ENCODE measurements at regions of chr16 and their contacts with region 1.

Region 1: DNA sequence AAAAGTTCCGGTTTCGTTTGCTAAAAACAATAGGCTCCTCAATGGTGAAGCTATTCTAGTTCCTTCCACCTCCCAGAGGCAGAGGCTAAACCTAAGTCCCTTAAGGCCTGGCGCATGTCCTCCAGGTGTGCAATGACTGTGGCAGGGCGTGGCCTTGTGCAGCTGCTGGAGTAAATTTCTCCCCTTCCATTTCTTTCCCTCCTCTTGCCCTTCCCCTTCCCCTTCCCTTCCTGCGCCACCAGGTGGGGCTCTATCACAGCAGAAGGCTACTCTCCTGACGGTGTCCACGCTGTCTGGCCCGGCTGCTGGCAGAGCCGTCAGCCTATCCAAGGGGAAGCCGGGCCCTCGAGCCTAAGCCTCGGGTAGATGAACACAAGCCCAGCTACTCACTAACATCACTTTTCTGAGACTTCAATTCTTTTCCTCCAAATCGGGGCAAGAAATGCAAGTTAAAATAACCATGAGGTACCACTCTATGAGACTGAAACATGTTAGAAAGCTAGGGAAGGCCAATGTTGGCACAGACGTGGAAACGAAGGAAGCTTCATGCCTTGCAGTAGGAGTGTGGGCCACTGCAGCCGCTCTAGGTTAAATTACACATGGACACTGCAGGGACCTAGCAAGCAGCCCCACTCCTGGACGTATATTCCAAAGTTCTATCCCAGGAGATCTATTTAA is 34.4 kb downstream of the C16orf78 start:
- DNase-seq: peak; percentile 87 to 91 (median 88)
- ATAC-seq: peak; percentile 98
- H3K4me3 ChIP-seq: no peak overlapping the region
- H3K27ac ChIP-seq: no peak overlapping the region
- H3K4me1 ChIP-seq: peaks cover 7% of the 10 kb centered on the region
- H3K27me3 ChIP-seq: no peaks in the 10 kb centered on the region
- CTCF ChIP-seq: peak; percentile 67 to 99 (median 95)
- POLR2A ChIP-seq: no peak

Region 2: DNA sequence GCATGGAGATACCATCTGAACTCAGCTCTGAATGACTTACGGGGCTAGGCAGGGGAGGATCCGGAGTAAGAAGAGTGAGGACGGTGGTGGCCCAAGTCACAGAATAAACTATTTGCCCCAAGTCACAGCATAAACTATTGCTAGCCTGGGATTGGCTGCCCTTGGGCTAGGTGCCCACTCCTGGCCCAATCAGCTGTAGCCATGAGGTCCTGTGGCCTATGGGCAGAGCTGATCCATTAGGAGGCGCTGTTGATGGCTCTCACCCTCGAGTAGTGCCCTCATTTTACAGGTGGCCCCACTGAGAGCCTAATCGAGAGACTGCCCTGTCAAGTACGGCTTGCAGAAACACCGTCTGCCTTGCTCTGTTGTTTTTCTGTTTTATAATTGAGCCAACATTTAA is 510.2 kb after region 1 on chr16:
- intact Hi-C with region 1: loop called (anchors 5 kb)
- DNase-seq: no peak
- ATAC-seq: no peak
- H3K4me3 ChIP-seq: no peak overlapping the region
- H3K27ac ChIP-seq: no peak overlapping the region
- H3K4me1 ChIP-seq: no peaks in the 10 kb centered on the region
- H3K27me3 ChIP-seq: no peaks in the 10 kb centered on the region
- CTCF ChIP-seq: no peak
- POLR2A ChIP-seq: no peak

Region 3: GRCh38 chr16:50797456-50797855 is 1389.4 kb after region 1 on chr16:
- intact Hi-C with region 1: loop called (anchors 10 kb)
- DNase-seq: no peak
- ATAC-seq: no peak
- H3K4me3 ChIP-seq: no peak overlapping the region
- H3K27ac ChIP-seq: no peak overlapping the region
- H3K4me1 ChIP-seq: no peaks in the 10 kb centered on the region
- H3K27me3 ChIP-seq: no peaks in the 10 kb centered on the region
- CTCF ChIP-seq: no peak
- POLR2A ChIP-seq: no peak